ENCODE measurements at regions of chr5 and their contacts with region 1.

Region 1: DNA sequence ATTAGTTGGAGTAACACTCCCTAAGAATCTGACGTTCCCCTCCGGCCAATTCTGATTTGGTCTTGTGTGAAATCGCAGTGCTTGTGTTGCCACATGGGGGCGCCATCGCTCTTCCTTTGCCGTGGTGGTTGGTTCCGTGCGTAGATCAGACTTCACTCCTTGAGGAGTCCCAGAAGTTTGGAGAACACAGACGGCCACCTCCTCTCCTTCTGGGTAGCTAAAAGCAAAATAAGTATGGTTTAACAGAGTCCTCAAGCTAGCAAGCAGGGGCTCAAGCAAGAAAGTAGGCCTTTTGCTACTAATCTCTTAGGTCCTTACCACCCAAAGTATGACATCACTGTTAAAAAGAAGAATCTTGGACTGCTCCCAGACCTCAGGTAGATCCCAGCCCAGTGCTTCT is 59.5 kb downstream of the HSPA4 start:
- DNase-seq: peak; percentile 87
- H3K4me3 ChIP-seq: no peak overlapping the region
- H3K27ac ChIP-seq: no peak overlapping the region
- H3K4me1 ChIP-seq: peaks cover 61% of the 10 kb centered on the region
- CTCF ChIP-seq: peak; percentile 99

Region 2: DNA sequence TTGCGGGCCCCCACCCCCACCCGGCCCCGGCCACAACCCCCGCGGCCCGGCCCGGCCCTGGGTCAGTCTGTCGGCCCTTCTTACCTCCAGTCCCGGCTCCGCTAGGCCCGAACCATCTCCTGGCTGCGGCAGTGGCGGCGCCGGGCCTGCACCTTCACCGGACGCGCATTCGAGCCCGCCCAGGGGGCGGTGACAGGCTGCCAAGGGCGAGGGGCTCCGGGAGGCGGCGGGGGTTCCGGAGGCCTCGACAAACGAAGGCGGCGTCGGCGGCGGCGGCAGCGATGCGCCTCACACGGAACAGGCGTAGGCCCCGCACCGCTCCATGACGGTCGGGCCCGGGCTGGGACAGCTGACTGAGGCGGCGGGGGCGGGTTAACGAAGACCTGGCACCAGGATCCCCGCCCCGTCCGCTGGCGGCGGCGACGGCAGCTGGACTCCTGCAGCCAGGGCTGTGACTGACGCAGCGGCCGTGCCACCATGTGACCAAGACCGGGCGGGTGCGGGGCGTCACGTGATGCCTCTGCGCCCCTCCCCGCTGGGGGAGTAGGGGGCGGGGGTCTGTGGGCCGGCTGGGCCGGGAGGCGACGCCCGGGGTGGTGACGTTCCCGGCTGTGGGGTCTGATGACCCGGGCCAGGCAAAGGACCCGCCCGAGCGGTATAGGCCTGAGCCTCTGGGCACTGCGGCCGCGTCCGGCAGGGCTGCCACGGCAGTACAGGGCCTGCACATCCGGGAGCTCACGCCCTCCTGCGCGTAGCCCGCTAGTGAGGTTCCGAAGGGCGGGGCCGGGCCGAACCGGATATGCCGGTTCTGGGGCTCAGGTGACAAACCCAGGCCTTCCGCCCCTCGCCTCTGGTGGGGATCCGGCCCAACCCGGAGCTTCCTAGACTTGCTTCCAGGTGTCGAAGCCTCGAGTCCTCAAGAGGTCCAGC is 147.9 kb before region 1 on chr5 and contains the start of gene AFF4:
- CTCF ChIA-PET with region 1: interaction called, 10 read pairs
- POLR2A ChIA-PET with region 1: no interaction called
- intact Hi-C with region 1: loop called (anchors 1 kb)
- DNase-seq: peak; percentile 95
- H3K4me3 ChIP-seq: peak within 1 kb of the TSS; percentile 80
- H3K27ac ChIP-seq: peak within 1 kb of the TSS; percentile 68
- H3K4me1 ChIP-seq: peaks cover 21% of the 10 kb centered on the region
- CTCF ChIP-seq: no peak
- total RNA-seq, gene AFF4: 19.6 and 21.6 TPM in 2 replicates

Region 3: GRCh38 chr5:133006653-133007052 is 104.6 kb before region 1 on chr5:
- CTCF ChIA-PET with region 1: no interaction called
- POLR2A ChIA-PET with region 1: no interaction called
- intact Hi-C with region 1: no loop called
- DNase-seq: no peak
- H3K4me3 ChIP-seq: no peak overlapping the region
- H3K27ac ChIP-seq: no peak overlapping the region
- H3K4me1 ChIP-seq: no peaks in the 10 kb centered on the region
- CTCF ChIP-seq: no peak

Region 4: DNA sequence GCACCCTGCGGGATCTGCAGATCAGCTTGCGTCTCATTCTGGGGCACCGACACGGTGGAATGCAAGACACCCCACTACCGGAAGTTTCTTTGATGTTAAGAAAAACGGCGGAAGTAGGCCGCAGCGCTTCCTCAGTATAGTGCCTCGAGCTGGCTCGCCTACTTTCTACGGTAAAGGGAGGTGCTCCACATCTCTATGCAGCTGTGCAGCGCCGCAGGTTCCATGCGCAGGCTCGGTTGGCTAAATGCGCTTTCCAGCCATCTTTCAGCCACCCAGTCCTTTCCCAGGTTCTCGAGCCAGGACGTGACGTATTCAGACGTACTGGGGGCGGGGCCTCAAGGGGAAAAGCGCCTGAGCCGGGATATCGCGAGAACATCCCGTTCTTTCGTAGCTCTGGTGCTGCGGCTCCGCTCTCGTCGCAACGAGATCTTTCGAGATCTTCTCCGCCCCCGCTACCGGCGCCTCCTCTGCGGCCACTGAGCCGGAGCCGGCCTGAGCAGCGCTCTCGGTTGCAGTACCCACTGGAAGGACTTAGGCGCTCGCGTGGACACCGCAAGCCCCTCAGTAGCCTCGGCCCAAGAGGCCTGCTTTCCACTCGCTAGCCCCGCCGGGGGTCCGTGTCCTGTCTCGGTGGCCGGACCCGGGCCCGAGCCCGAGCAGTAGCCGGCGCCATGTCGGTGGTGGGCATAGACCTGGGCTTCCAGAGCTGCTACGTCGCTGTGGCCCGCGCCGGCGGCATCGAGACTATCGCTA is 59.5 kb before region 1 on chr5 and contains the start of gene HSPA4:
- CTCF ChIA-PET with region 1: no interaction called
- POLR2A ChIA-PET with region 1: interaction called, 41 read pairs
- intact Hi-C with region 1: no loop called
- DNase-seq: peak; percentile 100
- H3K4me3 ChIP-seq: peak within 1 kb of the TSS; percentile 99
- H3K27ac ChIP-seq: peak within 1 kb of the TSS; percentile 97
- H3K4me1 ChIP-seq: peaks cover 38% of the 10 kb centered on the region
- CTCF ChIP-seq: no peak
- total RNA-seq, gene HSPA4: 65.4 and 86.6 TPM in 2 replicates

Region 5: GRCh38 chr5:133287500-133287899 is 176.2 kb after region 1 on chr5:
- CTCF ChIA-PET with region 1: no interaction called
- POLR2A ChIA-PET with region 1: interaction called, 3 read pairs
- intact Hi-C with region 1: loop called (anchors 1 kb)
- DNase-seq: peak; percentile 36
- H3K4me3 ChIP-seq: no peak overlapping the region
- H3K27ac ChIP-seq: no peak overlapping the region
- H3K4me1 ChIP-seq: no peaks in the 10 kb centered on the region
- CTCF ChIP-seq: peak; percentile 68

Region 6: DNA sequence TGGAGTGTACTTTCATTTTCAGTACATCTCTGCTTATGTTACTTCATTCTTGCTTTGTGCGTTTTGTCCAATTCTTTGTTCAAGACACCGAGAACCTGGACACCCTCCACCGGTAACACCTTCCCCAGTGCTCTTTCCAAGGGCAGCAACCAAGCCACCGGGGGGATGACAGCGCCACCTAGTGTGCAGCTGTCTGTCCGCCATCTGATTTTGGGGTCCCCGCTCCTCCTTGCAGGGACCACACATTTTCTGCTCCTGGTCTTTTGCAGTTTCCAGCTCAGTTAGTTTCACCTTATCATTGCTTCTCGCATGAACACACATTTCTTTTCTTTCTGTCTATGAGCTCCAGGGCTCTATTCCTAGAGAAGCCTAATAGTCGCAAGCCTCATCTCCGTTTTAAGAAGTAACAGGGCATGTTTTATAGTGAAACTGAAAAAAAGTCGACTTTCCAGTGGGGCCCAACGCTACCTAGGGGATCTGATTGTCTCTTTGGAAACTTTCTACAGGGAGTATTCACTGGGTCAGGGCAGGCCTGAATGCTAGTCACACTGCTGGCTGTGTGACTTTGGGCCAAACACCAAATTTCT is 349.0 kb after region 1 on chr5:
- CTCF ChIA-PET with region 1: no interaction called
- POLR2A ChIA-PET with region 1: no interaction called
- intact Hi-C with region 1: loop called (anchors 1 kb)
- DNase-seq: peak; percentile 52
- H3K4me3 ChIP-seq: no peak overlapping the region
- H3K27ac ChIP-seq: no peak overlapping the region
- H3K4me1 ChIP-seq: no peaks in the 10 kb centered on the region
- CTCF ChIP-seq: peak; percentile 92

Region 7: GRCh38 chr5:133938929-133939328 is 827.6 kb after region 1 on chr5:
- CTCF ChIA-PET with region 1: no interaction called
- POLR2A ChIA-PET with region 1: no interaction called
- intact Hi-C with region 1: loop called (anchors 5 kb)
- DNase-seq: peak; percentile 86
- H3K4me3 ChIP-seq: peak overlapping the region; percentile 47
- H3K27ac ChIP-seq: peak overlapping the region; percentile 98
- H3K4me1 ChIP-seq: peaks cover 87% of the 10 kb centered on the region
- CTCF ChIP-seq: no peak; the same call in 1 of the 2 replicates